Left colon (tissue), 2 donors: ENCODE measurements at regions of chr13 and their contacts with region 1.

Region 1: DNA sequence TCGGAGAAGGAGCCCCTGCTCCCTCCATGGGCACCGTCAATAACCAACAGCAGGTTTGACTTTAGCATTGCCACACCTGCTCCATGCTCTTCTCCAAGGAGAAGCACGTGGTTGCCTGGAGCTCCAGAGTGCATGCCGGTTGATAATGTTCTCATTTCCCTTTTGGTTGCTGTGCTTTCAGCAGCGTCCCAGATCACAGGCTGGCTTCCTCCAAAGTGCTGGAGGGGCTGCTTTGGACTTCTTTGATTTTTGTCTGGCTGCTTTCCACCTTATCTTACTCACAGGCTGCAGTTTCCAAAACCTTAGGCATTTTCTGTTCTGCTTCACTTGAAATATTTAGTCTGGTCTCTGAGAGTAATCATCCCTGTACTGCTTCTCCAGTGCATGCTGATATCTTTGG is 123.8 kb upstream of the IRS2 start:
- DNase-seq: no peak
- ATAC-seq: no peak

Region 2: GRCh38 chr13:109834973-109835720 is 75.0 kb before region 1 on chr13:
- intact Hi-C with region 1: loop called in 1 of 2 experiments (anchors 5 kb)
- DNase-seq: no peak
- ATAC-seq: no peak